ENCODE measurements at regions of chr1 and their contacts with region 1.

Region 1: DNA sequence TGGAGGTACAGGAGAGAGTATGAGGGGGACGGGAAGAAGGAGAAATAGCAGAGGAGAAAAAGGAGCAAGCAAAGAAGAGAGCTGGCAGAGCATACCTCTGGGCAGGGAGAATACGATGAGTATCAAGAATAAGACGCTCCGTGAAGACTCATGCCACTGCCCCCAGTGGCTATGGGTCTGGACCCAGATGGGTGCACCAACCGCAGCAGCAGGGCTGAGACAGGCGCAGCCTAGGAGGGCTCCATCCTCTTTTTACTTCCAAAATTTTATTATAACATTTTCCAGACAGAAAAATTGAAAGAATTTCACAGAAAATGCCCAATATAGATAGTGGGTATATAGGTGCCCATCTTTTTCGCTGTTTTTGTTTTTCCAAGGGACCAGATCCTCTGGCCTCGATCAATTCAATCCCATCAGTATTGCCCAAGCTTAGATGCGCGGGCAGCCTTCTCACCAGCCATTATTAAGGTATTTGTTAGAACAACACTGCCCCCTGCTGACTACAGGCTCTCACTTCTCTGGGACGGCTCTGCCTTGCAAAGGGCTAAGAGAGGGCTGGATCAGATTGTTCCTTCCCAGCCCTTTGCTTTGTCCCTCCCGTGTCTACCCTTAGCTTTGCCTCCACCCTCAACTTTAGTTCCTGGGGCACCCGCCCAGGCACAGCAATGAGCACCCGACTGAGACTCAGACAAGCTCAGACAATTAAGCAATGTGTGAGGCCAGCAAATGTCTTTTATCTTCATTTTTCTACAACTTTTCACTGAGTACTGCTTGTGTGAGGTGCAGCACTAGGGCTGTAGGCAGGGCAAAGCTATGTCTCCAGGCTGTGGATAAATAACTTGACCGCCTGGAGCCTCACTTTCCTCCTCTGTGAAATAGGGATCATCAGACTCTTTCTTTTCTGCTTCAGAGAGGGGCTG is 17.5 kb upstream of the CAMK1G start:
- DNase-seq: peak; percentile 45
- H3K4me3 ChIP-seq: no peak overlapping the region
- H3K27ac ChIP-seq: no peak overlapping the region
- H3K27me3 ChIP-seq: peaks cover 12% of the 10 kb centered on the region
- CTCF ChIP-seq: peak; percentile 68

Region 2: DNA sequence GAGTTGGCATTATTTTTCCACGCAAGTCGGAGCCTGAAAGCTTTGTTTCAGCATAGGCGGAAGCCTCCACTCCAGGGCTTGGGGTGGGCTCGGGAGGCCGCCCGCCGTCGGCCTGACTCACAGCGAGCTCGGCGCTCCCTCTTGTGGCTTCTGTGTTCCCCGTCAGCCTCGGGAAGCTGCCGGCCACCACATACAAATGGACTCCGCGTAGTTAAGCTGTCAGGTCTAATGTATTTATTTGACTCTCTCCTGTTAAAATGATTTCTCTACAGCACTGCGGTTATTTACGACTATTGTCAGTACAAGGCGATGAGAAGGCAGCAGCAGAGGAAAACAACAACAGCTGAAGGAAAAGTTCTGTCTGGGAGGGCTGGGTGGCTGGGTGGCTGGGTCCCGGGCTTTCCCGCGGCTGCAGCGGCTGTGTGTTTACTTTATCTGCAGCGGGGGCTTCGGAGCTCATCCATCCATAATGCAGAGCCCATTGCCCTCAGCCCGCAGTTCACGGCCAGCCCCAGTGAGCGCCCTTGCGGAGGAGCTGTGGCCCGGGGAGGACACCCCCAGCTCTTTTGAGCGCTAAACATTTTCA is 358.2 kb before region 1 on chr1:
- CTCF ChIA-PET with region 1: interaction called, 52 read pairs
- POLR2A ChIA-PET with region 1: no interaction called
- DNase-seq: peak; percentile 15
- H3K4me3 ChIP-seq: peak overlapping the region; percentile 28; the same call in 1 of the 2 replicates
- H3K27ac ChIP-seq: no peak overlapping the region
- H3K27me3 ChIP-seq: peaks cover 9% of the 10 kb centered on the region
- CTCF ChIP-seq: peak; percentile 77

Region 3: DNA sequence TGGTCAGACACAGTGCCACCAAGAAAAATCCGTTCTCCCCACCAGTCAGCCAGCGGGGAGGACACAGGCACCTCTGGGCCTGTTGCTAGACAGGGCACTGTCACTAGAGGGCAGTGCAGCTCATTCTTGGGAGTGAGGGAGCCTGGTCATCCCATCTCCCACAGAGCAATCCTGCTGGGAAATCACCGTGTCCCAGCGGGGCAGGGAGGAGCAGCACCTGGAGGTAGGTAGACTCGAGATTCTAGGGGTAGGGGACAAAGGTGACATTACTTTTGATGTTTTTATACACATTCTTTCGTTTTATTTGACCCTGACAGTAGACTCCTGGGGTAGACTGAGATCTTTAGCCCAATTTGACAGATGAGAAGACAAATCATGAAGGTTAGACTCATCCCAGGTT is 10.8 kb after region 1 on chr1:
- CTCF ChIA-PET with region 1: interaction called, 34 read pairs
- POLR2A ChIA-PET with region 1: no interaction called
- DNase-seq: peak; percentile 39
- H3K4me3 ChIP-seq: no peak overlapping the region
- H3K27ac ChIP-seq: no peak overlapping the region
- H3K27me3 ChIP-seq: peaks cover 15% of the 10 kb centered on the region
- CTCF ChIP-seq: peak; percentile 97

Region 4: GRCh38 chr1:209692745-209693504 is 126.9 kb after region 1 on chr1:
- CTCF ChIA-PET with region 1: interaction called, 49 read pairs
- POLR2A ChIA-PET with region 1: interaction called, 3 read pairs
- DNase-seq: peak; percentile 70
- H3K4me3 ChIP-seq: no peak overlapping the region
- H3K27ac ChIP-seq: no peak overlapping the region
- H3K27me3 ChIP-seq: no peaks in the 10 kb centered on the region
- CTCF ChIP-seq: peak; percentile 90

Measured in AG04450 (cell line).